Activated CD8-positive, alpha-beta T cell treated with anti-CD3 and anti-CD28 coated beads, Interleukin-2, amount 10 ng/mL, durations not matched to agents 7 days and 5 days (primary cell): ENCODE measurements at regions of chr1 and their contacts with region 1.

Region 1: DNA sequence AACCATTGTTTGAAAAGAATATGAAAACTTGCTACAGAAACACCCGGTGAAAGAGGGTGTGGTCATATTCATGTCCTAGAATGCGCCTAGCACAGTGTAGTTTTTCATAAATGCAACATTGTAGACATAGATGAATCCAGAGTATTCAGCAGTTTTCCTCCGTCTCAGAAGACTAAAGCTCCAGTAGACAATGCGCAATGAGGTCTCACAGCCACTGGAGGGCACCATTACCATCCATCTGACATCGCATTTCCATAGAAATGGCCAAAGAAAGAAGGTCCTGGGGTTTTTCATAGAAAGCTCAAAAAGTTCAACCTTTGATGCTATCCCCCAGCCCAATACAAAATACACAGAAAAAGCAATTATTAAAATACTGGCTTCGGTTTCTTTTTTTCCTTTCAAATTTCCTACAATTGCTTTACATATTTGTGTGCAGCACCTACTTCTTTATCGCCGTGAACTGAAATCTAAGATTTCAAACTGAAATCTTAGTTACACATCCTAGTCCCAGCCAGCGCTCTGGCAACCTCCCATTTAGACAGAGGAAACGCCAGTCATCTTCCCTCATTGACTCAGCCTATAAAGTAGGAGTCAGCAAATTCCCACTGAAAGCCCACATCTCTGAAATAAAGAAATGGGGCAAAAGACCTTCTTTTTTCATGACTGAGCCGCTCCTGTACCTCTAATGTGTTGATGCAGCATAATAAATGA is 3.9 kb upstream of the CD58 start:
- DNase-seq: peak; percentile 75
- ATAC-seq: no peak
- H3K4me3 Mint-ChIP-seq: no peak overlapping the region
- H3K27ac Mint-ChIP-seq: no peak overlapping the region
- H3K4me1 Mint-ChIP-seq: peaks cover 31% of the 10 kb centered on the region
- H3K27me3 Mint-ChIP-seq: peaks cover 5% of the 10 kb centered on the region

Region 2: GRCh38 chr1:116556289-116557006 is 18.3 kb before region 1 on chr1:
- CTCF ChIA-PET with region 1: interaction called, 11 read pairs
- POLR2A ChIA-PET with region 1: no interaction called
- DNase-seq: peak; percentile 67
- ATAC-seq: peak; percentile 91
- H3K4me3 Mint-ChIP-seq: no peak overlapping the region
- H3K27ac Mint-ChIP-seq: peak overlapping the region; percentile 37
- H3K4me1 Mint-ChIP-seq: peaks cover 65% of the 10 kb centered on the region
- H3K27me3 Mint-ChIP-seq: no peaks in the 10 kb centered on the region

Region 3: DNA sequence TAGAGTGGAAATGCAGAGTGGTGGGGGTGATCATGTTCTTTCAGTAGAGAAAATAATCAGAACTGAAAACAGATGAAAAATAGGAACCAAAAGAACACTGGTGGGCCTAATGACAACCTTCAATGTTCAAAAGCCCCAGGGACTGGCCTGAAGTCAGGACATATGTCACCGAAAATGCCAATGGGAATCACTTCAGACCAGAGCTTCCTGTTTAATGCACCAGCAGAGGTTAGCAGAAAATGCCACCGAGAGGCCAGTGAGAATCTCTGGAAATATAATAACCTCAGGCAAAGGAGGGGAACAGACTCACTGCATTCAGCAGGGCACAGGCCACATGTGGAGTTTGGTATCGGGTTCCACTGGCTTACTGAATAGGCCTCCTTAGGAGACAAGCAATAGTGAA is 12.0 kb after region 1 on chr1:
- CTCF ChIA-PET with region 1: interaction called, 13 read pairs
- POLR2A ChIA-PET with region 1: no interaction called
- DNase-seq: no peak
- ATAC-seq: no peak
- H3K4me3 Mint-ChIP-seq: no peak overlapping the region
- H3K27ac Mint-ChIP-seq: no peak overlapping the region
- H3K4me1 Mint-ChIP-seq: peaks cover 5% of the 10 kb centered on the region
- H3K27me3 Mint-ChIP-seq: peaks cover 2% of the 10 kb centered on the region